Psoas muscle (tissue), 8 donors: ENCODE measurements at regions of chr3 and their contacts with region 1.

Region 1: GRCh38 chr3:142447852-142448823 is at the start of gene XRN1:
- DNase-seq: peak; percentile 98 to 99
- ATAC-seq: peak; percentile 99 to 100 (median 100)
- H3K4me3 ChIP-seq: peak within 1 kb of the TSS; percentile 98
- H3K27ac ChIP-seq: peak within 1 kb of the TSS; percentile 98
- H3K4me1 ChIP-seq: peaks cover 28% of the 10 kb centered on the region
- H3K27me3 ChIP-seq: no peaks in the 10 kb centered on the region
- CTCF ChIP-seq: no peak
- total RNA-seq, gene XRN1: 26.7 to 46.1 (median 34.4) TPM

Region 2: GRCh38 chr3:142459929-142460328 is 11.8 kb after region 1 on chr3:
- intact Hi-C with region 1: no loop called
- DNase-seq: no peak
- ATAC-seq: no peak
- H3K4me3 ChIP-seq: no peak overlapping the region
- H3K27ac ChIP-seq: no peak overlapping the region
- H3K4me1 ChIP-seq: no peaks in the 10 kb centered on the region
- H3K27me3 ChIP-seq: no peaks in the 10 kb centered on the region
- CTCF ChIP-seq: no peak

Region 3: DNA sequence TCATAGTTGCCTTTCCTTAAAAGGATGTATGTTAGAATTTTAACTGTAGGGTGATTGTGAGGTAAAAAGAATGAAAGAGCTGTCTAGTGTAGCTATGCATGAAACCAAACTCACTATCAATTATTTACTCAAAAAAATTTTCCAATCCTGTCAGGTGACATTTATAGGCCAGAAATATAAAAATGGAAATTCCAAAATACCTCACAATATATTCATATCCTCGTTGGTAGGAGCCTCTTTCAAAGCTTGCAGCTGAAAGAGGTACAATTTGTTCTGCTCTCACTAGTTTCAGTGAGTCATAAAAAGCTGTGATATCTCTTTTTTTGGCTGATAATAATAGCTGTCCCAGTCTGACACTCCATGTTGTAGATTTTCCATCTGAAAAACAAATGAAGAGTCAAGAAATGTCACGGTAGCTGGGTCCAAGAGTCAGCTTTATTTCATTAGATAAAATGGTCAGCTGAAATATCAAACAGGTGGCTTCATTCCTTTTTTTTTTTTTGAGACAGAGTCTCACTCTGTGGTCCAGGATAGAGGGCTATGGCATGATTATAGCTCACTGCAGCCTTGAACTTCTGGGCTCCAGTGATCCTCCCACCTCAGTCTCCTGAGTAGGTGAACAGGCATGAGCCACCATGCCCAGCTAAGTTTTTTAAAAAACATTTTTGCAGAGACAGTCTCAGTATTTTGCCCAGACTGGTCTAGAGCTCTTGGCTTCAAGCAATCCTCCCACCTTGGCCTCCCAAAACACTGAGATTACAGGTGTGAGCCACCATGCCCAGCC is 50.5 kb after region 1 on chr3:
- intact Hi-C with region 1: loop called in 1 of 2 experiments (anchors 5 kb)
- DNase-seq: no peak
- ATAC-seq: no peak
- H3K4me3 ChIP-seq: no peak overlapping the region
- H3K27ac ChIP-seq: no peak overlapping the region
- H3K4me1 ChIP-seq: peaks cover 12% of the 10 kb centered on the region
- H3K27me3 ChIP-seq: no peaks in the 10 kb centered on the region
- CTCF ChIP-seq: no peak

Region 4: GRCh38 chr3:142530296-142530695 is 82.2 kb after region 1 on chr3:
- intact Hi-C with region 1: no loop called
- DNase-seq: no peak
- ATAC-seq: no peak
- H3K4me3 ChIP-seq: no peak overlapping the region
- H3K27ac ChIP-seq: no peak overlapping the region
- H3K4me1 ChIP-seq: no peaks in the 10 kb centered on the region
- H3K27me3 ChIP-seq: no peaks in the 10 kb centered on the region
- CTCF ChIP-seq: no peak